Left colon (tissue), 2 donors: ENCODE measurements at regions of chr6 and their contacts with region 1.

Region 1: GRCh38 chr6:46996860-46997641 is 45.1 kb downstream of the ADGRF1 start:
- DNase-seq: peak in 1 of 2 donors; percentile 34
- ATAC-seq: peak; percentile 100

Region 2: DNA sequence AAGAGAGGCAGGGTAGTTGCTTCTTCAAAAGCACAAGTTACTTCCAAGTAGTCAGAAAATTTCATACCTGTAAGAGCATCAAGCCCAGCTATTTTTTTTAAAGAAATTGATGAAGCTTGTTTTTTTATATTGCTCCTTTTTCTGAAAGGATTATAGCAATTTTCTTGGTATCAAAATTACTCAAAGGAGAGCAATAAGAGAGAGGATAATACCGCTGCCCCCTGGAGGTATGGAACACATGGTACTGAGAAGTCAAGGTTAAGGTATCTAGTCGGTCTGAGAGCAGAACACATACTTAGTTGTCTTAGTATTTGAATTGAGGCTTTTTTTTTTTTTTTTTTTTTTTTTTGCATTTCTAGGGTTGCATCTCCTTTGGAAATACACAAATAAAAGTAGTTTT is 134.7 kb before region 1 on chr6:
- intact Hi-C with region 1: loop called in 1 of 2 experiments (anchors 5 kb)
- DNase-seq: no peak
- ATAC-seq: no peak

Region 3: DNA sequence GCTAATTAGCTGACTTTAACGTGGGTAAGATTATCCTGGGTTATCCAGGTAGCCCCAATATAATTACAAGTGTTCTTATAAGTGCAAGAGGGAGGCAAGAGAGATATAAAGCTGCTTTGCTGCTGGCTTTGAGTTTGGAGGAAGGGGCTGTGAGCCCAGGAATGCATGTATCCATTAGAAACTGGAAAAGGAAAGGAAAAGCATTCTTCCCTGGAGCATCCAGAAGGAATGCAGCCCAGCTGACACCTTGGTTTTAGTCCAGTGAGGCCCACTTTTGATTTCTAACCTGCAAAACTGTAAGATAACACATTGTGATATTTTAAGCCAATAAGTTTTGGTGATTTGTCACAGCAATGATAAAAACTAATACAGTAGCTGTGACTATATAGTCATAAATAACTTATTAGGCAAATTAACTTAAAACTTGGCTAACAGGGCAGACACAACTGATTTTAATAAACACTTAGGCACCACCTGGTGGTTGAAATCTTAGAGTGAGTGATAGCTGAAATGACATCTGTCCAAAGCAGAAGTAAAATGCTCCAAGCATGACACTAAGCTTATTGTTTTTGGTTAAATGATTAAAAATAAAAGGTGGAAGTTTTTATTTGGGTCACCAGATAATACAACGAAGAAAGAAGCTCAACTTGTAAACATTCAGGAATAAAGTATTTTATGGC is 737.0 kb after region 1 on chr6:
- intact Hi-C with region 1: no loop called
- DNase-seq: no peak
- ATAC-seq: peak; percentile 46